Activated CD4-positive, alpha-beta T cell treated with anti-CD3 and anti-CD28 coated beads, Interleukin-2, amount 10 ng/mL, durations not matched to agents 24 days and 14 days (primary cell): ENCODE measurements at regions of chr10 and their contacts with region 1.

Region 1: GRCh38 chr10:97553575-97554031 is 19.0 kb upstream of the ANKRD2 start:
- DNase-seq: peak; percentile 88
- H3K4me3 Mint-ChIP-seq: no peak overlapping the region
- H3K27ac Mint-ChIP-seq: no peak overlapping the region
- H3K4me1 Mint-ChIP-seq: peaks cover 6% of the 10 kb centered on the region
- H3K27me3 Mint-ChIP-seq: peaks cover 2% of the 10 kb centered on the region

Region 2: GRCh38 chr10:96673318-96674099 is 880.1 kb before region 1 on chr10:
- intact Hi-C with region 1: no loop called
- DNase-seq: no peak
- H3K4me3 Mint-ChIP-seq: no peak overlapping the region
- H3K27ac Mint-ChIP-seq: no peak overlapping the region
- H3K4me1 Mint-ChIP-seq: peaks cover 5% of the 10 kb centered on the region
- H3K27me3 Mint-ChIP-seq: no peaks in the 10 kb centered on the region

Region 3: GRCh38 chr10:97407211-97407951 is 146.2 kb before region 1 on chr10:
- intact Hi-C with region 1: loop called (anchors 2 kb)
- DNase-seq: peak; percentile 90
- H3K4me3 Mint-ChIP-seq: peak overlapping the region; percentile 73
- H3K27ac Mint-ChIP-seq: peak overlapping the region; percentile 63
- H3K4me1 Mint-ChIP-seq: peaks cover 13% of the 10 kb centered on the region
- H3K27me3 Mint-ChIP-seq: no peaks in the 10 kb centered on the region

Region 4: GRCh38 chr10:97463363-97464132 is 90.1 kb before region 1 on chr10:
- intact Hi-C with region 1: loop called (anchors 1 kb)
- DNase-seq: peak; percentile 83
- H3K4me3 Mint-ChIP-seq: no peak overlapping the region
- H3K27ac Mint-ChIP-seq: peak overlapping the region; percentile 43
- H3K4me1 Mint-ChIP-seq: peaks cover 1% of the 10 kb centered on the region
- H3K27me3 Mint-ChIP-seq: no peaks in the 10 kb centered on the region

Region 5: GRCh38 chr10:97534746-97535367 is 18.7 kb before region 1 on chr10:
- intact Hi-C with region 1: loop called (anchors 1 kb)
- DNase-seq: peak; percentile 66
- H3K4me3 Mint-ChIP-seq: no peak overlapping the region
- H3K27ac Mint-ChIP-seq: no peak overlapping the region
- H3K4me1 Mint-ChIP-seq: no peaks in the 10 kb centered on the region
- H3K27me3 Mint-ChIP-seq: peaks cover 2% of the 10 kb centered on the region

Region 6: GRCh38 chr10:97543025-97543575 is 10.5 kb before region 1 on chr10:
- intact Hi-C with region 1: loop called (anchors 1 kb)
- DNase-seq: peak; percentile 72
- H3K4me3 Mint-ChIP-seq: peak overlapping the region; percentile 16
- H3K27ac Mint-ChIP-seq: peak overlapping the region; percentile 71
- H3K4me1 Mint-ChIP-seq: peaks cover 23% of the 10 kb centered on the region
- H3K27me3 Mint-ChIP-seq: no peaks in the 10 kb centered on the region